Caco-2 (cell line): ENCODE measurements at regions of chr3 and their contacts with region 1.

Region 1: GRCh38 chr3:183635431-183636220 is at the start of gene KLHL24:
- DNase-seq: peak; percentile 92 to 93
- H3K4me3 ChIP-seq: peak within 1 kb of the TSS; percentile 100
- H3K4me3 Mint-ChIP-seq: peak within 1 kb of the TSS; percentile 82
- H3K27ac Mint-ChIP-seq: peak within 1 kb of the TSS; percentile 84
- H3K4me1 ChIP-seq: no peaks in the 10 kb centered on the region
- H3K4me1 Mint-ChIP-seq: no peaks in the 10 kb centered on the region
- H3K27me3 ChIP-seq: no peaks in the 10 kb centered on the region
- H3K27me3 Mint-ChIP-seq: no peaks in the 10 kb centered on the region
- CTCF ChIP-seq: no peak
- total RNA-seq, gene KLHL24: 16.8 and 17.6 TPM in 2 replicates

Region 2: GRCh38 chr3:183560607-183561006 is 75.0 kb before region 1 on chr3:
- CTCF ChIA-PET with region 1: no interaction called
- POLR2A ChIA-PET with region 1: no interaction called
- intact Hi-C with region 1: no loop called
- DNase-seq: peak; percentile 51 to 58
- H3K4me3 ChIP-seq: no peak overlapping the region
- H3K4me3 Mint-ChIP-seq: no peak overlapping the region
- H3K27ac Mint-ChIP-seq: no peak overlapping the region
- H3K4me1 ChIP-seq: peaks cover 9% of the 10 kb centered on the region; the same call in 1 of the 2 replicates
- H3K4me1 Mint-ChIP-seq: peaks cover 9% of the 10 kb centered on the region
- H3K27me3 ChIP-seq: no peaks in the 10 kb centered on the region
- H3K27me3 Mint-ChIP-seq: no peaks in the 10 kb centered on the region
- CTCF ChIP-seq: peak; percentile 39 to 47

Region 3: DNA sequence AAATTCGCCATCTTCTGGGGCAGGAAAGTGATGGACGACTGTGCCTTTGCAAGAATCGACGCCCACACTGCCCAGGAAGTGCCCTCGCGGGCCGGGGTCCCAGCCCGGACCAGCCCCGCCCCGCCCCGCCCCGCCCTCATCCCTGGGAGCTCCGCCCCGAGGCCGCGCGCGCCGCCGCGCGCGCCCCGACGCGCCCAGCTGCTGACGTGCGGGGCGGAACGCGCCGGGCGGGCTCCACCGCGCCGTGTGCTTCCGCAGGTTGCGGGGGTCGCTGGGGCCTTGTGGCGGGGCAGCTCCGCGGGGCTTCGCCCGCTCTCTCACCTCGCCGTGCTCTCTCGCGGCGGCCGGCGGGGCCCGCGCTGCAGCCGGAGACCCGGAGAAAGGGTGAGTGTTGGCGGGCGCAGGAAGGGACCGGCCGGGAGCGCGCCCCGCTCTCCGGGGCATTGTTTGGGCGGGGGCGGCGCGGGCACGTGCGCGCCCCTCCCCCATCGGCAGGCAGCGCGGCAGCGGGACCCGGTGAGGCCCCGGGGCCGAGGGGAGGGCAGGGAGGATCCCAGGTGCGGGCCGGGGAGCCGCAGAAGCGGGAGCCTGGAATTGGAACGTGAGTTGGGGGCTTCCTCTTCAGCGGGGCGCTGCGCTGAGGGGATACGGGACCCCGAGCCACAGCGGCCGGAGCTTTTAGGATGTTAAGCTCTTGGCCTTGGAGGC is 62.1 kb after region 1 on chr3 and contains the start of gene YEATS2:
- CTCF ChIA-PET with region 1: interaction called, 5 read pairs
- POLR2A ChIA-PET with region 1: interaction called, 9 read pairs
- intact Hi-C with region 1: loop called (anchors 2 kb)
- DNase-seq: peak; percentile 75 to 79
- H3K4me3 ChIP-seq: peak within 1 kb of the TSS; percentile 95
- H3K4me3 Mint-ChIP-seq: peak within 1 kb of the TSS; percentile 79
- H3K27ac Mint-ChIP-seq: peak within 1 kb of the TSS; percentile 53
- H3K4me1 ChIP-seq: no peaks in the 10 kb centered on the region
- H3K4me1 Mint-ChIP-seq: peaks cover 29% of the 10 kb centered on the region
- H3K27me3 ChIP-seq: no peaks in the 10 kb centered on the region
- H3K27me3 Mint-ChIP-seq: no peaks in the 10 kb centered on the region
- CTCF ChIP-seq: no peak
- total RNA-seq, gene YEATS2: 34.5 and 37.7 TPM in 2 replicates